Dorsolateral prefrontal cortex (tissue), 120 donors: ENCODE measurements at regions of chr14 and their contacts with region 1.

Region 1: GRCh38 chr14:105448706-105449111 is 25.9 kb upstream of the CRIP2 start:
- DNase-seq: peak in 8 of 10 donors; percentile 63 to 88 (median 70)
- H3K4me3 ChIP-seq: peak overlapping the region in 7 of 59 donors; percentile 5 to 27 (median 13)
- H3K27ac ChIP-seq: peak overlapping the region in 9 of 59 donors; percentile 16 to 71 (median 48)
- H3K27me3 ChIP-seq: no peaks in the 10 kb centered on the region
- CTCF ChIP-seq: peak; percentile 64 to 96 (median 90)

Region 2: DNA sequence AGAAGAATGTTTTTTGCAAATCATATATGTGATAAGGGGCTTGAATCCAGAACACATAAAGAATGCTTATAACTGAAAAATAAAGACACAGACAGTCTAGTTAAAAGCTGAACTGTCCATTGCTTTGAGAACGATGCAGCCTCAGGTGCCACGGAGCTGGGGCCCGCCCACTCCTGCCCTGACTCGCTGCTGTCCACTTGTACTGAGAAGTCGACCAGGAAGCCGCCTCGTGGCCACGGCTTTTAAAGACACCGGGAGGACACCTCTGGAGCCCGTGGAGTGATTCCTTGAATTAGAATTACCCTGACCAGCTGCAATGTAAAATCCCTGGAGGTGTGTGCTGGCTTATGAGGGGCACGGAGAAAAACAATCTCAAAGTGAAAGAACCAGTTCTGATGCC is 74.3 kb before region 1 on chr14:
- intact Hi-C with region 1: loop called in 1 of 2 experiments (anchors 5 kb)
- DNase-seq: no peak
- H3K4me3 ChIP-seq: no peak overlapping the region
- H3K27ac ChIP-seq: no peak overlapping the region
- H3K27me3 ChIP-seq: no peaks in the 10 kb centered on the region
- CTCF ChIP-seq: no peak

Region 3: GRCh38 chr14:105409364-105409763 is 39.3 kb before region 1 on chr14:
- intact Hi-C with region 1: loop called in 1 of 2 experiments (anchors 5 kb)
- DNase-seq: no peak
- H3K4me3 ChIP-seq: no peak overlapping the region
- H3K27ac ChIP-seq: no peak overlapping the region
- H3K27me3 ChIP-seq: peaks cover 0 to 13% (median 0%) of the 10 kb centered on the region in 45 donors
- CTCF ChIP-seq: no peak

Region 4: GRCh38 chr14:105480952-105481801 is 32.5 kb after region 1 on chr14:
- intact Hi-C with region 1: loop called in 1 of 2 experiments (anchors 2 kb)
- DNase-seq: peak; percentile 82 to 91 (median 86)
- H3K4me3 ChIP-seq: peak overlapping the region; percentile 28 to 70 (median 46)
- H3K27ac ChIP-seq: peak overlapping the region; percentile 9 to 95 (median 83)
- H3K27me3 ChIP-seq: peaks cover 0 to 12% (median 3%) of the 10 kb centered on the region in 45 donors
- CTCF ChIP-seq: peak; percentile 91 to 100 (median 99)

Region 5: GRCh38 chr14:105499256-105500030 is 50.7 kb after region 1 on chr14:
- intact Hi-C with region 1: no loop called
- DNase-seq: peak; percentile 37 to 96 (median 91)
- H3K4me3 ChIP-seq: peak overlapping the region in 19 of 59 donors; percentile 3 to 50 (median 23)
- H3K27ac ChIP-seq: peak overlapping the region; percentile 49 to 99 (median 97)
- H3K27me3 ChIP-seq: no peaks in the 10 kb centered on the region
- CTCF ChIP-seq: peak in 7 of 56 donors; percentile 4 to 21 (median 16)

Region 6: DNA sequence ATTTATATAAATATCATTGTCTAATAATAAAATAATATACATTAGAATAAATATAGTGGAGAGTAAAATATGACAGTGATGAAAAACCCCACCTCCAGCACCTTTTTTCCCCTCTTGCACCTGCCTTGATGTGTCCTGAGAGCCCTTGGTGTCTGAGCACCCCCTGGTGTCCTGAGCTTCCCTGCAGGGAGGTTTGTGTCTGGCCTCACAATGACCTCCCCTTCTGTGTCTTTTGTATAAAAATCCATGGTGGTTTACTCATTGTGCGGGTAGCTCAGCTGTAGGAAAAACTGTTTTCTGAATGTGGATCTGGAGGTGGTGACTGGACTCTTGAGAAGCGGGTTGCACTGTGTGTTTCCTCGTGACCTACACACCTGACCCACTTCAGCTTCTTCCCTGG is 714.6 kb after region 1 on chr14:
- intact Hi-C with region 1: no loop called
- DNase-seq: no peak
- H3K4me3 ChIP-seq: no peak overlapping the region
- H3K27ac ChIP-seq: no peak overlapping the region
- H3K27me3 ChIP-seq: peaks cover 0 to 79% (median 34%) of the 10 kb centered on the region in 45 donors
- CTCF ChIP-seq: no peak

Region 7: GRCh38 chr14:106633721-106634120 is 1185.0 kb after region 1 on chr14:
- intact Hi-C with region 1: no loop called
- DNase-seq: no peak
- H3K4me3 ChIP-seq: no peak overlapping the region
- H3K27ac ChIP-seq: no peak overlapping the region
- H3K27me3 ChIP-seq: peaks cover 0 to 87% (median 34%) of the 10 kb centered on the region in 45 donors
- CTCF ChIP-seq: no peak